ENCODE measurements at regions of chr12 and their contacts with region 1.

Region 1: DNA sequence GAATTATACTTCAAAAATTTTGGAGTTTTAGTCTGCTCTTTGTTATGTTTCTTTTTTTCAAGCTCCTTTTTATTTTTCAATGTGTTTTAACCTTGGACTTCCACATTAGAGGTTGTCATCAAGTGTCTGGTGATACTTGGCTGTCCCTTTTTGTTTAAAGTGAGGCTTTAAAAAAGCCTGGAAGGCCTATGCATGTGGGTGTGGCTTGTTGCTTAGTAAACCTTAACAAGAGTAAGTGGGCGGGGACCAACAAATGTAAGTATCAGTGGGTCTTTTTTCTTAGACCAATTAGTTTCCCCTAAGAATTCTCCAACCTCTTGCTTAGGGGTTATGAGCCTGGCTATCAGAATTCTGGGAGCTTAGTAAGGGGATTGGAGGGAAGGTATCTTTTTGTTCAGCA is 26.4 kb downstream of the HCFC2 start:
- DNase-seq: no peak
- ATAC-seq: no peak
- H3K4me3 ChIP-seq: no peak overlapping the region
- H3K27ac ChIP-seq: no peak overlapping the region
- H3K4me1 ChIP-seq: no peaks in the 10 kb centered on the region
- H3K27me3 ChIP-seq: no peaks in the 10 kb centered on the region
- CTCF ChIP-seq: no peak

Region 2: GRCh38 chr12:103978384-103978982 is 112.2 kb before region 1 on chr12:
- intact Hi-C with region 1: loop called in 1 of 10 experiments (anchors 10 kb)
- DNase-seq: no peak
- ATAC-seq: no peak
- H3K4me3 ChIP-seq: no peak overlapping the region
- H3K27ac ChIP-seq: no peak overlapping the region
- H3K4me1 ChIP-seq: peaks cover 0 to 22% (median 9%) of the 10 kb centered on the region in 9 donors
- H3K27me3 ChIP-seq: no peaks in the 10 kb centered on the region
- CTCF ChIP-seq: no peak

Measured in heart right ventricle (tissue), 16 donors.